ENCODE measurements at regions of chr9 and their contacts with region 1.

Region 1: GRCh38 chr9:36924071-36924470 is 110.0 kb downstream of the PAX5 start:
- DNase-seq: no peak
- ATAC-seq: peak; percentile 55
- H3K4me3 ChIP-seq: no peak overlapping the region
- H3K4me3 Mint-ChIP-seq: no peak overlapping the region
- H3K27ac ChIP-seq: peak overlapping the region; percentile 1
- H3K27ac Mint-ChIP-seq: peak overlapping the region; percentile 92
- H3K4me1 ChIP-seq: peaks cover 2 to 7% of the 10 kb centered on the region in 2 donors
- H3K4me1 Mint-ChIP-seq: peaks cover 68% of the 10 kb centered on the region
- H3K27me3 ChIP-seq: no peaks in the 10 kb centered on the region
- H3K27me3 Mint-ChIP-seq: no peaks in the 10 kb centered on the region
- CTCF ChIP-seq: no peak

Region 2: GRCh38 chr9:36470643-36471290 is 453.3 kb before region 1 on chr9:
- CTCF ChIA-PET with region 1: no interaction called
- POLR2A ChIA-PET with region 1: no interaction called
- intact Hi-C with region 1: loop called (anchors 5 kb)
- DNase-seq: peak; percentile 79
- ATAC-seq: peak; percentile 96
- H3K4me3 ChIP-seq: peak overlapping the region; percentile 30 to 63 (median 48)
- H3K4me3 Mint-ChIP-seq: peak overlapping the region; percentile 83
- H3K27ac ChIP-seq: peak overlapping the region; percentile 85 to 95
- H3K27ac Mint-ChIP-seq: peak overlapping the region; percentile 87
- H3K4me1 ChIP-seq: peaks cover 19 to 24% of the 10 kb centered on the region in 2 donors
- H3K4me1 Mint-ChIP-seq: peaks cover 35% of the 10 kb centered on the region
- H3K27me3 ChIP-seq: no peaks in the 10 kb centered on the region
- H3K27me3 Mint-ChIP-seq: no peaks in the 10 kb centered on the region
- CTCF ChIP-seq: no peak

Region 3: DNA sequence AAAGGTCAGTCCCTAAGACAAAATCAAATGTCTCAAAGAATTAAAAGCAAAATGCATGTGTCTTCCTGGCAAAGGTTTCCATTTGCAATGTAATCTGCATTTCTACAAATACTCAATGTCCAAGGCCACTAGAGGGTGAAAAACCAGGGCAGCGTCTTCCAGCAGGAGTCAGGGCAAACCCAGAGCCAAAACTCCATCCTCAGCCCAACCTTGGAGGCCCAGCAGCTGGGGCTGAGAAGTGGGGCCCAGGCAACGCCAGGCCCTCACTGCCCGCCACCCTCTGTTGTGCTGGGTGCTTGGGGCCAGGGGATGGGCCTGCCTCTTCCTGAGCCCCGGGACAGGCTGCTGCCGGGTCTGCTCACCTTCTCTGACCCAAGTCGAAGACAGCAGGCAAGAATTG is 90.1 kb before region 1 on chr9:
- CTCF ChIA-PET with region 1: no interaction called
- POLR2A ChIA-PET with region 1: no interaction called
- intact Hi-C with region 1: no loop called
- DNase-seq: no peak
- ATAC-seq: no peak
- H3K4me3 ChIP-seq: no peak overlapping the region
- H3K4me3 Mint-ChIP-seq: peak overlapping the region; percentile 44
- H3K27ac ChIP-seq: peak overlapping the region in 1 of 2 donors; percentile 20
- H3K27ac Mint-ChIP-seq: peak overlapping the region; percentile 50
- H3K4me1 ChIP-seq: peaks cover 21 to 44% of the 10 kb centered on the region in 2 donors
- H3K4me1 Mint-ChIP-seq: peaks cover 64% of the 10 kb centered on the region
- H3K27me3 ChIP-seq: no peaks in the 10 kb centered on the region
- H3K27me3 Mint-ChIP-seq: no peaks in the 10 kb centered on the region
- CTCF ChIP-seq: no peak

Region 4: DNA sequence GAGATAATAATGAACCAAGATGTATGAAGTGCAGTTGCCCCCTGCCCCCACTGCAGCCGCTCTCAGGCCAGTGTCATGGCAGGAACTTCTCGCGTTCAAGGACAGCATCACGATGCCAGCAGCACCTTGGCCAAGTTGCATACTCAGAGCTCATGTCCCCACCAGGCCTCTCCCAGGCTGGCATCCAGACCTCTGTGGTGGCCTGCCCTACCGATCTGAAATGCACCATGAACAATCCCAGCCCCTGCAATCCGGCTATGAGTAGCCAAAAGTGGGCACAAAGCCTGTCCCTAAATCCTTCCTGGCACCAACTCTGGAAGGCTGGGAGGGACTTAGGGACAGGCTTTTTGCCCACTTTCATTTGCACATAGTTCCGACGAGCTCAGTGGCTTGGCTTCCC is 30.9 kb before region 1 on chr9:
- CTCF ChIA-PET with region 1: no interaction called
- POLR2A ChIA-PET with region 1: no interaction called
- intact Hi-C with region 1: no loop called
- DNase-seq: no peak
- ATAC-seq: no peak
- H3K4me3 ChIP-seq: no peak overlapping the region
- H3K4me3 Mint-ChIP-seq: no peak overlapping the region
- H3K27ac ChIP-seq: no peak overlapping the region
- H3K27ac Mint-ChIP-seq: peak overlapping the region; percentile 8
- H3K4me1 ChIP-seq: peaks cover 0 to 13% of the 10 kb centered on the region in 2 donors
- H3K4me1 Mint-ChIP-seq: peaks cover 30% of the 10 kb centered on the region
- H3K27me3 ChIP-seq: no peaks in the 10 kb centered on the region
- H3K27me3 Mint-ChIP-seq: no peaks in the 10 kb centered on the region
- CTCF ChIP-seq: no peak

Region 5: DNA sequence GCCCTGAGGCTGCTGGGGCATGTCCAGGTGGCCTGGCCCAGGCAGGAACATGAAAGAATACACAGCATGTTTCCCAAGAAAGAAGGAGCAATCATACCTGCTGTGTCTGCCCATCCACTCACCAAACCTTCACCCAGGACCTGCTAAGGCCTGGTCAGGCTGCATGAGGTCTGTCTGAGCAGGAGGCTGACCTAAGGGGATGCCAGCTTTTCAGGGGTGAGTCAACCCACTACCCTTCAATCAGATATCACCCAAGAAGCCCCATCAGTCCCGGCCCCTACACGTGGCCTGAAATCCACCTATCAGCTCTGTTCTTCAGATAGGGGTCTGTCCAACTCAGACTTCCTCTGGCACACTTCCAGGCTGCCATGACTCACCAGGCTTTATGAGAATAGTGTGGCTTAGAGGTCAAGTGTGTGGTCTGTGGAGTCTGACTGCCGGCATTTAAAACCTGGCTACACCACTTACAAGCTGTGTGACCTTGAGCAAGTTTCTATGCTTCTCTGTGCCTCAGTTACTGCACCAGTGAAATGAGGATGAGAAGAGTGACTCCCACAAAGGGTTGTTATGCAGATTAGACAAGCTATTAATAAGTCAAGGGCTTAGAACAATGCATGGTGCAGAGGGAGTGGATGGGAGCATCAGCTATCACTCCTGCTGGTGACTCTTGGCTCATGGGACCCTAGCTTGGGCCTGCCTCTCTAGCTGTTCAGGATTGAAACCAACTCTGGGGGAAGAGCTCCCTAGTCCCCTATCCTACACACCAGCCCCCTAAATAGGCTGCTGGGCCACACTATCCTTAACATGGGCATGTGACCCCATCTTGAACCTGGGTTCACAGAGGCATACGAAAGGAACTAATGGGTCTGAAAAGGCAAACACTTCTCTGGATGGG is 20.3 kb before region 1 on chr9:
- CTCF ChIA-PET with region 1: no interaction called
- POLR2A ChIA-PET with region 1: no interaction called
- intact Hi-C with region 1: no loop called
- DNase-seq: no peak
- ATAC-seq: peak; percentile 41
- H3K4me3 ChIP-seq: no peak overlapping the region
- H3K4me3 Mint-ChIP-seq: no peak overlapping the region
- H3K27ac ChIP-seq: peak overlapping the region in 1 of 2 donors; percentile 52
- H3K27ac Mint-ChIP-seq: peak overlapping the region; percentile 78
- H3K4me1 ChIP-seq: peaks cover 0 to 25% of the 10 kb centered on the region in 2 donors
- H3K4me1 Mint-ChIP-seq: peaks cover 50% of the 10 kb centered on the region
- H3K27me3 ChIP-seq: no peaks in the 10 kb centered on the region
- H3K27me3 Mint-ChIP-seq: no peaks in the 10 kb centered on the region
- CTCF ChIP-seq: no peak

Region 6: GRCh38 chr9:36974731-36975130 is 50.7 kb after region 1 on chr9:
- CTCF ChIA-PET with region 1: no interaction called
- POLR2A ChIA-PET with region 1: no interaction called
- intact Hi-C with region 1: loop called (anchors 5 kb)
- DNase-seq: no peak
- ATAC-seq: no peak
- H3K4me3 ChIP-seq: no peak overlapping the region
- H3K4me3 Mint-ChIP-seq: no peak overlapping the region
- H3K27ac ChIP-seq: peak overlapping the region in 1 of 2 donors; percentile 40
- H3K27ac Mint-ChIP-seq: peak overlapping the region; percentile 87
- H3K4me1 ChIP-seq: peaks cover 19 to 59% of the 10 kb centered on the region in 2 donors
- H3K4me1 Mint-ChIP-seq: peaks cover 69% of the 10 kb centered on the region
- H3K27me3 ChIP-seq: no peaks in the 10 kb centered on the region
- H3K27me3 Mint-ChIP-seq: no peaks in the 10 kb centered on the region
- CTCF ChIP-seq: no peak